ENCODE measurements at regions of chr14 and their contacts with region 1.

Region 1: DNA sequence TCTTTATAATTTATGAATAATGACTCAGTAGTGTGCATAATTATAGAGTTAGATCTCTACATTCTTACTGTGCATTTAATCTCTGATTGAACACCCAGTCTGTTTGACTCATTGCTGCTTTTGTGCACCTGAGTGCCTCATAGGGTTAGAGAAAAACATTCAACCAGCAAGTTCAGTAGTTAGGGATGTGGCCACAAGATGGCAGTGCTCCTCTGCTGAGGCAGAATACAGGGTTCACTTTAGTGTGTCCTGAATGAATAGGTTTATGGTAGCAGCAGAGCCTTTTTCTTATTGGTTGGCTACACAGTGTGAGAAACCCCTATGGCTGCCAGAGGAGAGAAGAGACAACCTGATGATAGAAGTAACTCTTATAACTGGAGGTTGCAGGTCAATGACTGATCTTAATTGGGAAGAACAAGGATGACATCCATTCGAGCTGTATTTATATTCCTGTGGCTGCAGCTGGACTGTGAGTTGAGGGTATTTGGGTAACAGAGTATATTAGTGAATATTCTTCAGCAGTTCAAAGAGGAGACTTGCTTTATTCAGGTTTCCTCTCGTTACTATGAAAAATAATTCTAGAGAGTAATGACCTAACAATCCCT is 194.9 kb upstream of the OR4E1 start:
- DNase-seq: peak; percentile 53 to 84 (median 74)
- ATAC-seq: peak; percentile 91
- H3K4me3 ChIP-seq: peak overlapping the region in 1 of 2 experiments; percentile 2
- H3K4me3 Mint-ChIP-seq: peak overlapping the region; percentile 65
- H3K27ac ChIP-seq: no peak overlapping the region
- H3K27ac Mint-ChIP-seq: peak overlapping the region; percentile 80
- H3K4me1 ChIP-seq: peaks cover 5% of the 10 kb centered on the region
- H3K4me1 Mint-ChIP-seq: peaks cover 29% of the 10 kb centered on the region
- H3K27me3 ChIP-seq: no peaks in the 10 kb centered on the region
- H3K27me3 Mint-ChIP-seq: no peaks in the 10 kb centered on the region
- CTCF ChIP-seq: peak; percentile 81

Region 2: DNA sequence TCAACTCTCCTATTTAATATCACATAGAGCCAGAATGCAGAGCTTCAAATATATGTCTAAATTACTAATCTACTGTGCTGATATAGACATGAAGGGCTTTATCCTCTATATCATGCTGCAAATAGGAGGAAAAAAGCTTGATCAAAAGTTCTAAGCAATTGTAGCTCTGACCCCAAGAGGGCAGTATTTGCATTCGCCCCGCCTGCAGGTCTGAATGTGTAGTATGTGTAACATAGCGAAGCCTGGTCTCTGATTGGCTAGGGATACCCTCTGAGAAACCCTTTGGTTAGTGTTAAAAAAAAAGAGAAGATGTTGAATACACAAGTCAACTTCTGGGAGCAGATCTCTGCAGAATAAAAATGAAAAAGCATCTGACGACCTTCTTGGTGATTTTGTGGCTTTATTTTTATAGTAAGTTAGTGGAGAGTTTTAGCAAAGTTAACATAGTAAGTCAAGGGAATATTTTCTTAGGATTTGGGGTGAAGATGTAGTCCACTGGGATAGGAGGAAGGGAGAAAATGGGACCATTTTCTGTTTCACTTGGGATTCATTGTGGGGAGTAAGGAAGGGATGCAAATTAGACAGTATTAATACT is 43.3 kb before region 1 on chr14:
- CTCF ChIA-PET with region 1: no interaction called
- POLR2A ChIA-PET with region 1: no interaction called
- intact Hi-C with region 1: no loop called
- DNase-seq: peak in 5 of 9 experiments; percentile 18 to 77 (median 47)
- ATAC-seq: peak; percentile 96
- H3K4me3 ChIP-seq: peak overlapping the region in 1 of 2 experiments; percentile 31
- H3K4me3 Mint-ChIP-seq: peak overlapping the region; percentile 58
- H3K27ac ChIP-seq: no peak overlapping the region
- H3K27ac Mint-ChIP-seq: no peak overlapping the region
- H3K4me1 ChIP-seq: no peaks in the 10 kb centered on the region
- H3K4me1 Mint-ChIP-seq: peaks cover 5% of the 10 kb centered on the region
- H3K27me3 ChIP-seq: peaks cover 0 to 3% of the 10 kb centered on the region in 2 experiments
- H3K27me3 Mint-ChIP-seq: peaks cover 26% of the 10 kb centered on the region
- CTCF ChIP-seq: peak; percentile 66

Region 3: GRCh38 chr14:21882226-21882625 is 13.7 kb after region 1 on chr14:
- CTCF ChIA-PET with region 1: interaction called, 14 read pairs
- POLR2A ChIA-PET with region 1: interaction called, 5 read pairs
- intact Hi-C with region 1: loop called in 1 of 2 experiments (anchors 2 kb)
- DNase-seq: no peak
- ATAC-seq: no peak
- H3K4me3 ChIP-seq: no peak overlapping the region
- H3K4me3 Mint-ChIP-seq: no peak overlapping the region
- H3K27ac ChIP-seq: no peak overlapping the region
- H3K27ac Mint-ChIP-seq: no peak overlapping the region
- H3K4me1 ChIP-seq: no peaks in the 10 kb centered on the region
- H3K4me1 Mint-ChIP-seq: peaks cover 9% of the 10 kb centered on the region
- H3K27me3 ChIP-seq: no peaks in the 10 kb centered on the region
- H3K27me3 Mint-ChIP-seq: no peaks in the 10 kb centered on the region
- CTCF ChIP-seq: no peak

Region 4: GRCh38 chr14:21902650-21903103 is 34.1 kb after region 1 on chr14:
- CTCF ChIA-PET with region 1: interaction called, 10 read pairs
- POLR2A ChIA-PET with region 1: no interaction called
- intact Hi-C with region 1: no loop called
- DNase-seq: peak in 7 of 9 experiments; percentile 3 to 69 (median 48)
- ATAC-seq: peak; percentile 95
- H3K4me3 ChIP-seq: no peak overlapping the region
- H3K4me3 Mint-ChIP-seq: peak overlapping the region; percentile 49
- H3K27ac ChIP-seq: no peak overlapping the region
- H3K27ac Mint-ChIP-seq: peak overlapping the region; percentile 83
- H3K4me1 ChIP-seq: peaks cover 4% of the 10 kb centered on the region
- H3K4me1 Mint-ChIP-seq: peaks cover 13% of the 10 kb centered on the region
- H3K27me3 ChIP-seq: no peaks in the 10 kb centered on the region
- H3K27me3 Mint-ChIP-seq: no peaks in the 10 kb centered on the region
- CTCF ChIP-seq: peak; percentile 59

Region 5: GRCh38 chr14:21933681-21934080 is 65.1 kb after region 1 on chr14:
- CTCF ChIA-PET with region 1: no interaction called
- POLR2A ChIA-PET with region 1: no interaction called
- intact Hi-C with region 1: loop called (anchors 1 to 5 kb)
- DNase-seq: peak in 2 of 9 experiments; percentile 42 to 60
- ATAC-seq: peak; percentile 73
- H3K4me3 ChIP-seq: no peak overlapping the region
- H3K4me3 Mint-ChIP-seq: no peak overlapping the region
- H3K27ac ChIP-seq: no peak overlapping the region
- H3K27ac Mint-ChIP-seq: no peak overlapping the region
- H3K4me1 ChIP-seq: peaks cover 5% of the 10 kb centered on the region
- H3K4me1 Mint-ChIP-seq: peaks cover 10% of the 10 kb centered on the region
- H3K27me3 ChIP-seq: no peaks in the 10 kb centered on the region
- H3K27me3 Mint-ChIP-seq: no peaks in the 10 kb centered on the region
- CTCF ChIP-seq: peak; percentile 58

Region 6: GRCh38 chr14:21940887-21941856 is 72.6 kb after region 1 on chr14:
- CTCF ChIA-PET with region 1: no interaction called
- POLR2A ChIA-PET with region 1: no interaction called
- intact Hi-C with region 1: loop called in 1 of 2 experiments (anchors 5 kb)
- DNase-seq: peak in 7 of 9 experiments; percentile 15 to 70 (median 43)
- ATAC-seq: peak; percentile 78
- H3K4me3 ChIP-seq: peak overlapping the region; percentile 7 to 26
- H3K4me3 Mint-ChIP-seq: peak overlapping the region; percentile 77
- H3K27ac ChIP-seq: no peak overlapping the region
- H3K27ac Mint-ChIP-seq: peak overlapping the region; percentile 84
- H3K4me1 ChIP-seq: peaks cover 18% of the 10 kb centered on the region
- H3K4me1 Mint-ChIP-seq: peaks cover 22% of the 10 kb centered on the region
- H3K27me3 ChIP-seq: no peaks in the 10 kb centered on the region
- H3K27me3 Mint-ChIP-seq: no peaks in the 10 kb centered on the region
- CTCF ChIP-seq: peak; percentile 45

Measured in CD8-positive, alpha-beta T cell (primary cell).